Activated CD4-positive, alpha-beta T cell treated with anti-CD3 and anti-CD28 coated beads for 36 hours (primary cell): ENCODE measurements at regions of chr22 and their contacts with region 1.

Region 1: DNA sequence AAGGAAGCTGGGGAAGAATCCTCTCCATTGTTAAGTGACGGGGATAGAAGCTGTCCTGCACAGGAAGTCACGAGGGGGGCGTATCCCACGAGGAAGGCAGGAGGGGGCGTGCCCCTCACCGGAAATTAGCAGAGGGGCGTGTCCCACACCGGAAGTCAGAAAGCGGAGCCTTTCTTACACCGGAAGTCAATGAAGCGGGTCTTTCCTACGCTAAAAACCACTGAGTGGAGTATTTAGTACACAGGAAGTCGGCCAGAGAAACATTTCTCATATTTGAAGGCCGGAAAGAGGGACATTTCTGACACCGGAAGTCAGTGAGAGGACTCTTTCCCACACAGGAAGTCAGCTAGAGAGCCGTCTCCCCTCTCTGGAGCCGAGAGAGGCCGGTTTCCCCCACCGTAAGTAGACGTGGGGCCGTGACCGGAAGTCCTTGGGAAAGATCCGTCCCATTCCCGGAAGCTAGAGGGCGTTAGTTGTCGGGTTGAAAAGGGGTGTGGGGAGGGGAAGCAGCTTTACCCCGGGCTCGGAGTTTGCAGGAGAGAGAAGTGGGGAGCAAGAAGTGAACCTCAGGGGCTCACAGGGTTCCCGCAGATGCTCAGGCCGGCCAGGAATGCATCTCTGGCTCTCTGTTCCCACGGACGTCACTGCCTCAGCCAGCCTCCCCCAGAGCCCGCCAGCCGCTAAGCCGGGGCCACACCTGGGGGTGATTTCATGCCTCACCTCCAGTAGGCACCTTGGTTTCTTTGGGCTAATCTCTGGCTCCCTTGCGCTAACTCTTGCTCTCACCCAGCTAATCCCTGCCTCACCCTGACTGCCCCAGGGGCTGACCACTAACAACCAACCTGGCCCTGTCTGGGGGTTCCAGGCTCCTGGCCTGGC is 15.4 kb downstream of the MIAT start:
- DNase-seq: peak; percentile 96
- ATAC-seq: peak; percentile 71
- H3K4me3 Mint-ChIP-seq: peak overlapping the region; percentile 92
- H3K27ac Mint-ChIP-seq: peak overlapping the region; percentile 96
- H3K4me1 Mint-ChIP-seq: peaks cover 67% of the 10 kb centered on the region
- H3K27me3 Mint-ChIP-seq: no peaks in the 10 kb centered on the region

Region 2: GRCh38 chr22:25395915-25396314 is 1276.9 kb before region 1 on chr22:
- CTCF ChIA-PET with region 1: no interaction called
- POLR2A ChIA-PET with region 1: no interaction called
- intact Hi-C with region 1: loop called in 1 of 2 experiments (anchors 5 kb)
- DNase-seq: no peak
- ATAC-seq: no peak
- H3K4me3 Mint-ChIP-seq: no peak overlapping the region
- H3K27ac Mint-ChIP-seq: no peak overlapping the region
- H3K4me1 Mint-ChIP-seq: peaks cover 29% of the 10 kb centered on the region
- H3K27me3 Mint-ChIP-seq: no peaks in the 10 kb centered on the region

Region 3: GRCh38 chr22:26428515-26429457 is 244.0 kb before region 1 on chr22 and contains the start of gene ASPHD2:
- CTCF ChIA-PET with region 1: interaction called, 4 read pairs
- POLR2A ChIA-PET with region 1: no interaction called
- intact Hi-C with region 1: loop called (anchors 1 kb)
- DNase-seq: peak; percentile 89
- ATAC-seq: peak; percentile 86
- H3K4me3 Mint-ChIP-seq: peak within 1 kb of the TSS; percentile 90
- H3K27ac Mint-ChIP-seq: peak within 1 kb of the TSS; percentile 93
- H3K4me1 Mint-ChIP-seq: peaks cover 48% of the 10 kb centered on the region
- H3K27me3 Mint-ChIP-seq: no peaks in the 10 kb centered on the region
- total RNA-seq, gene ASPHD2: 10.2 to 10.5 TPM

Region 4: DNA sequence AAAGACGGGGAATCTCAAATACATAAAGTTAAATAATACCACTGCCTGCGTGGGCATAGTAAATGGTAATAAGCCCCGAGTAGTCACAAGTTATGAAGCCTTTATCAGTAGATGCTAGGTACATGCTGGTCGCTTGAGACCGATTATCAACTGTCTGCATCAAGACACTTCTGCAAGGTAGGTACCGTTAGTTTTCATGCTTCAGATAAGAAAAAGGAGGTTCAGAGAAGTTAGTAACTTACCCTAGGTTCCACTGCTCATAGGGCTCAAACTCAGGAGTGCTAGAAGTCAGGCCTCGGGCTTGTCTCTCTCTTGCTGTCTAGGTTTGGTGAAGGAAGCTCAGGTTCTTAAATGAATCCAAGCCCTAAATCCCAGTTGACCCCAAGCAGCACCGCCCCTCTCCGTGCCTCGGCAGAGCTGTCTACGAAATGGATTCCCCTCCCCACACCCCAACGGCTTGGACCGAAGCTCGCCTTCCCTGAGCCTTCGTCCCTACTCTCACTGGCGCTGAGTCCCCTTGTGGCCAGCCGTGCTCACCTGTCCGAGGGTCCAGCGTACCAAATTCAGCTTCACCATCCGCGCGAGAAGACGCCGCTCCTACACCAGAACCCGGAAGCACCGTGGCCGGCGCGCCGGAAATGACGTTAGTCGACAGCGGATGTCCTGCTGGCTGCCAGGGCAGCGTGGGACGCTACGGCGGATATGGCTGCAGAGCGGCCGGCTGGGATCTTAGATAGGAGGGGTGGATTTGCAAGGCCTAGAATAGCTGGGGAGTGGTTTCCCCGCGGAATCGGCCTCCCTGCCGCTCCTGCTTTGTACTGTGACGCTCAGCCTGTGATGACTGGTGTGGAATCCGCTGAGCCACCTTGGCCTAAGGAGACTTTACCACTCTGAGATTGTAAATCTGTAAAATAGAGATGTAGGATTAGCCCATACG is 160.7 kb before region 1 on chr22 and contains the start of gene TFIP11:
- CTCF ChIA-PET with region 1: no interaction called
- POLR2A ChIA-PET with region 1: no interaction called
- intact Hi-C with region 1: loop called in 1 of 2 experiments (anchors 1 kb)
- DNase-seq: peak; percentile 97
- ATAC-seq: peak; percentile 98
- H3K4me3 Mint-ChIP-seq: peak within 1 kb of the TSS; percentile 95
- H3K27ac Mint-ChIP-seq: peak within 1 kb of the TSS; percentile 95
- H3K4me1 Mint-ChIP-seq: peaks cover 27% of the 10 kb centered on the region
- H3K27me3 Mint-ChIP-seq: no peaks in the 10 kb centered on the region
- total RNA-seq, gene TFIP11: 36.5 to 41.7 TPM

Region 5: DNA sequence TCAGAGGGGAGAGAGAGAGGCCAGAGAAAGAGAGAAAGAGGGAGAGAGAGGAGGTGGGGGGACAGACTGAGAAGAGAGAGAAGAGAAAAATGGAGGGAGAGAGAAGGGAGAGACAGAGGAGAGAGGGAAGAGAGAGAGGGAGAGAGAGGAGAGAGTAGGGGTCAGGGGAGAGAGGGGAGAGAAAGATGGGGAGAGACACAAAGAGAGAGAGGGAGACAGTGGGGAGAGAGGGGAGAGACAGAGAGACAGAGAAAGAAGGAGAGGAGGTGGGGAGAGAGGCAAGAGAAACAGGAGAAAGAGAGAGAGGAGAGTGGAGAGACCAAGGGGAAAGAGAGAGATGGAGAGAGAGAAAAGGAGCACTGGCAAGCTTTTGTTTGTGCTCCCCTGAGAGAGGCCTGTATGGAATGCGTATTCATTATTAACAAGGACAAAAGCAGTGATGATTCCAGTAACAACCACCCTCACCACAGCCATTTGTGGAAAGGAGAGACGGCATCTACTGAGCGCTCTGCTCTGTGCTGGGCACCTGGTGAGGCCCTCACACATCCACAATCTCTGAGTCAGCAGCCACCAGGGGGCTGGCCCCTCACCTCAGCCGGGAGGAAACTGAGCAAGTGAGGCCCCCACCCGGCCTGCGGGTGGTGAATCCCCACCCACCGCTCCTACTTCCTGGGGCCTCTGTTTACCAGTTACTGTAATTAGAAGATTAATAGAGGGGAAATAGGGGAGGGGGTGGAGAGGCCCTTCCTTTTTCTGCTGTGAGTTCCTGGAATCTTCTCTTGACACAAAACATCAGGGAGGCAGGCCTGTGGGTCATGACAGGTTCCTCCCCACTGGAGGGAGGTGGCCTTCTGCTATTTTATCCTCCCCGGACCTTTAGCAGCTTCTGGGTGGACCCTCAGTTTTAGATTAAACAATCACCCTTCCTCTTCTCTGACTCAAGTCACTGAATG is 30.1 kb before region 1 on chr22:
- CTCF ChIA-PET with region 1: interaction called, 3 read pairs
- POLR2A ChIA-PET with region 1: no interaction called
- intact Hi-C with region 1: loop called in 1 of 2 experiments (anchors 1 kb)
- DNase-seq: peak; percentile 91
- ATAC-seq: peak; percentile 88
- H3K4me3 Mint-ChIP-seq: peak overlapping the region; percentile 61
- H3K27ac Mint-ChIP-seq: peak overlapping the region; percentile 91
- H3K4me1 Mint-ChIP-seq: peaks cover 62% of the 10 kb centered on the region
- H3K27me3 Mint-ChIP-seq: peaks cover 6% of the 10 kb centered on the region

Region 6: DNA sequence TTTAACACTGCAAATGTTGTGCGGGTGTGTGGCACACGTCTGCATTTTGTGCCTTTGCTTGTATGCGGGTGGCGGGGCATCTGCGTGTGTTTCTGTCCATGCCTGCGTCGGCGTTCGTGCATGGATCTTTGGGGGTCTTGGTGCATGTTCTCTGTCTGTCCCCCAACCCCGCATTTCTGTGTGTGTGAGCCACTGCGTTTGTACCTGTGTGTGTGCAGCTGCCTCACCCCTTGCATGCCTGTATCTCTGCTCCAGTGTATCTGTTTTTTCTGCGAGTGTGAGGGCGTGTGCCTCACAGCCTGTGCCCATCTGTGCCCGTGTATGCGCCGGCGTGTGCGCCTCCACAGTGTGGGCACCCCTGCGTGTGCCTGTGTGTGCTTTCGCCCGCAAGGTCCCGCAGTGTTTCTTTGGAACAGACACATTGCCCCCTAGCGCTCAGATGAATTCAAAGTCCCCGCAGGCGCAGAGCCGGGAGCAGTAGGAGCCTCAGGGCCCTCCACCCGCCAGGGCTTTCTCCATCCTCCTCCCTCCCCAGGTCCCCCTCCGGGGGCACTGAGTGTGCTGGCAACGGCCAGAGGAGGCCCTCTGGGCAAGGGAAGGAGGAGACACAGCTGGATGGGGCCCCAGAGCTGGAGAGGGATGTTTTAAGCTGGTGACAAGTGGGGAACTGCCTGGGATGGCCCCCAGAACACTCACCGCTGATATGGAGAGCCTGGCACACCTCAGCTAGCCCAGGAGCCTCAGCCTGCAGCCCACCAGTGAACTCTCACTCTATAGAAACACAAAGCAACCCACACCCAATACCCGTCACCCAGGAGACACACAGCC is 1131.9 kb after region 1 on chr22:
- CTCF ChIA-PET with region 1: no interaction called
- POLR2A ChIA-PET with region 1: no interaction called
- intact Hi-C with region 1: loop called (anchors 2 to 10 kb)
- DNase-seq: peak; percentile 75
- ATAC-seq: peak; percentile 62
- H3K4me3 Mint-ChIP-seq: no peak overlapping the region
- H3K27ac Mint-ChIP-seq: no peak overlapping the region
- H3K4me1 Mint-ChIP-seq: peaks cover 8% of the 10 kb centered on the region
- H3K27me3 Mint-ChIP-seq: peaks cover 30% of the 10 kb centered on the region